ENCODE measurements at regions of chr5 and their contacts with region 1.

Region 1: GRCh38 chr5:64347309-64347708 is 158.5 kb upstream of the RGS7BP start:
- DNase-seq: no peak
- ATAC-seq: no peak
- H3K4me3 ChIP-seq: no peak overlapping the region
- H3K27ac ChIP-seq: no peak overlapping the region
- H3K4me1 ChIP-seq: peaks cover 0 to 9% (median 0%) of the 10 kb centered on the region in 9 donors
- H3K27me3 ChIP-seq: no peaks in the 10 kb centered on the region
- CTCF ChIP-seq: peak in 1 of 9 donors; percentile 14

Region 2: GRCh38 chr5:64229163-64229774 is 118.0 kb before region 1 on chr5:
- intact Hi-C with region 1: loop called in 1 of 10 experiments (anchors 10 kb)
- DNase-seq: no peak
- ATAC-seq: peak in 1 of 8 donors; percentile 47
- H3K4me3 ChIP-seq: no peak overlapping the region
- H3K27ac ChIP-seq: no peak overlapping the region
- H3K4me1 ChIP-seq: no peaks in the 10 kb centered on the region
- H3K27me3 ChIP-seq: no peaks in the 10 kb centered on the region
- CTCF ChIP-seq: peak; percentile 49 to 79 (median 69)

Region 3: DNA sequence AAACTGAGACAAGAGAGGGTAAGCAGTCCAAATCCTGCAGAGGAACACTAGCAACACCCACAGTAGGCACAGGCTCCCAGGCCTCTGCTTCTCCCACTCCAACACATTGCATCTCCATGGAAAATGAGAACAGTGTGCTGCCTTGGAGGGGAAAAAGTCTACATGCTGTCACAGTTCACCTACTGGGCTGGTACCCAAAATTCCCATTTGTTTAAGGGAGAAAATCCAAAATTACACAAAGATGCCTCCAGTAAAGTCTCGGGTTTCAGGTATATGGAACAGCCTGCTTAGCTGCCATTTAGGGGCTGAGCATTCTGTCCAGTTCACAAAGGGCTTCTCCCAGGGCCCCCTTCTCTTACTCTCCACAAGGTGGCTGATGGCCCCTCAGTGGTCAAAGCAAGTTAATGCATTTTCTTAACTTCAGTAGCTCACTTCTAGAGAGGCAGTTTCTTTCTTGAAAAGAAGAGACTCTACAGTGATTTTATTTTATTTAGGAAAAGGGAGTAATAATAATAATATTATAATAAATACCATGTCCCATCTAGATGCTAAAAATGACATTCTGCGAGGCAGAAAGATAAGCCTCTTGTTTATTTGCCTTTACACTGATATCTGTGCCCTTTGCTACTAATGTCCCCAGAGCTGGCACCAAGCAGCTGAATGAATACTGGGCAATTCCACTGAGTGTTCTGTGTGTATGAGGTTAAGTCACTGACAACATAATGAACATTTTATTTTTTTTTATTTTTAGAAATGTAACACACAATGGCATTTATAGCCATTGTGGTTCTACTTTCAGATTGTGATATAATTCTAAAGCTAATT is 247.9 kb after region 1 on chr5:
- intact Hi-C with region 1: loop called in 1 of 10 experiments (anchors 10 kb)
- DNase-seq: no peak
- ATAC-seq: peak in 5 of 8 donors; percentile 23 to 77 (median 44)
- H3K4me3 ChIP-seq: no peak overlapping the region
- H3K27ac ChIP-seq: no peak overlapping the region
- H3K4me1 ChIP-seq: peaks cover 0 to 14% (median 5%) of the 10 kb centered on the region in 9 donors
- H3K27me3 ChIP-seq: no peaks in the 10 kb centered on the region
- CTCF ChIP-seq: peak in 8 of 9 donors; percentile 8 to 58 (median 36)